Activated T-helper 2 cell treated with anti-CD3 and anti-CD28 coated beads, Interferon-gamma antibody, Interleukin-2, Interleukin-4, amounts not matched to agents 10 μg/mL and 5 μg/mL and 100 μg/mL, durations not matched to agents 14 hours and 24 hours and 36 hours (primary cell): ENCODE measurements at regions of chr2 and their contacts with region 1.

Region 1: DNA sequence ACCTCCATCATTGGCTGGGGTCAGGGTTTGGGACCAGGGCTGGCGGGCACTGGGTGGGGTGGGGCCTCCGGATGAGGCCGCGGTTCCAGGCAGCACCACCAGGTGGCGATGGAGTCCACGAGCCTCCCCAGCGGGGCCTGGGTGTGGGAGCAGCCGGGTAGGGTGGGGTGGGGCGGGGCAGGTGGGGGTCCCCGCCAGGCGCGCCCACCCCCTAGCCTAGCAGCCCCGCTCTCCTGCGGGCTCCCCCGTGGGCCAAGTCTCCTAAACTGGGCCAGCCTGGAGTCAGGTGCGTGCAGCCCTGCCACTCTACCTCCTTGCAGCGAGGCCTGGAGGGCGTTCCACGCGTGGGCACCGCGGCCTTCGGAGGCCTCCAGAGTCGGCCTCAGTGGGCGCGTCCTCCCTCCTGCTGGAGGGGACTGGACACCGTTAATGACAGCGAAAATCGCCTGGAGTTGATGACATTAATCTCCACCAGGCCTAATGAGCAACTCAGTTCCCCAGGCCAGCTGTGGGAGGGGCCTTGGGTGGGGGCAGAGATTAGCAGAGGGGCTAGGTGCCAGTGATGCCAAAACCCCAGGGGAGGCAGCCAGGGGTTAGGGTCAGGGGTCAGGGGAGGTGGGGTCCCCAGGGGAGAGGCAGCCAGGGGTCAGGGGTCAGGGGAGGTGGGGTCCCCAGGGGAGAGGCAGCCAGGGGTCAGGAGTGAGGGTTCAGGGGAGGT is 187.6 kb downstream of the TWIST2 start:
- DNase-seq: peak; percentile 43
- H3K4me3 Mint-ChIP-seq: no peak overlapping the region
- H3K27ac Mint-ChIP-seq: no peak overlapping the region
- H3K4me1 Mint-ChIP-seq: no peaks in the 10 kb centered on the region
- H3K27me3 Mint-ChIP-seq: peaks cover 21% of the 10 kb centered on the region

Region 2: DNA sequence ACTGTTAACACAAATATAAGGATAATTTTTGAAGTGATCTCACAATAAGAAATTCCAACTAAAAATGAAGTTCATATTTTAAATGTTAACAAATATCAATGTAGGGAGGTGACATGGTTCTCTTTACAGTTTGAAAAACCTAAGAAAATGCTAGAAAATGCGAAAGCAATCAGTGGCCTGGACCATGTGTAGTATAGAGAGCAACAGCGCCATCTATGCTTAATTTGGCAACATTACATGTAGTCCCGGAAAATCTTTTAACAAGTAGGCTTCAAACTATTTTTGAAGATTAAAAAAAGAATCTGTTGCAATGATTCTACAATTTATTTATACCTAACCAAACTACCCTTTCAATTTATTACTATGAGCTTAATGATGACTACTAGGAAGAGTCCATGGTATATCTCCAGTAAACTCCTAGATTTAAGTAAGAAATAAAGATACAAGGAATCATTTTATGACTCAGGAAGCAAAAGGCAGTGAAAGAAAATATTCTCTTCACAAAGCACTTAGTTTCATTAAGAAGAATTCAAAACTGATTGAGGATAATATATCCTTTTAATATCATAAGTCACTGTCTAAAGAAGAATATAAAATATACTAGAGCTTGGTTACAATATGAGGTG is 956.3 kb after region 1 on chr2:
- intact Hi-C with region 1: loop called (anchors 10 kb)
- DNase-seq: no peak
- H3K4me3 Mint-ChIP-seq: no peak overlapping the region
- H3K27ac Mint-ChIP-seq: no peak overlapping the region
- H3K4me1 Mint-ChIP-seq: no peaks in the 10 kb centered on the region
- H3K27me3 Mint-ChIP-seq: no peaks in the 10 kb centered on the region